Ovary (tissue), 10 donors: ENCODE measurements at regions of chr7 and their contacts with region 1.

Region 1: DNA sequence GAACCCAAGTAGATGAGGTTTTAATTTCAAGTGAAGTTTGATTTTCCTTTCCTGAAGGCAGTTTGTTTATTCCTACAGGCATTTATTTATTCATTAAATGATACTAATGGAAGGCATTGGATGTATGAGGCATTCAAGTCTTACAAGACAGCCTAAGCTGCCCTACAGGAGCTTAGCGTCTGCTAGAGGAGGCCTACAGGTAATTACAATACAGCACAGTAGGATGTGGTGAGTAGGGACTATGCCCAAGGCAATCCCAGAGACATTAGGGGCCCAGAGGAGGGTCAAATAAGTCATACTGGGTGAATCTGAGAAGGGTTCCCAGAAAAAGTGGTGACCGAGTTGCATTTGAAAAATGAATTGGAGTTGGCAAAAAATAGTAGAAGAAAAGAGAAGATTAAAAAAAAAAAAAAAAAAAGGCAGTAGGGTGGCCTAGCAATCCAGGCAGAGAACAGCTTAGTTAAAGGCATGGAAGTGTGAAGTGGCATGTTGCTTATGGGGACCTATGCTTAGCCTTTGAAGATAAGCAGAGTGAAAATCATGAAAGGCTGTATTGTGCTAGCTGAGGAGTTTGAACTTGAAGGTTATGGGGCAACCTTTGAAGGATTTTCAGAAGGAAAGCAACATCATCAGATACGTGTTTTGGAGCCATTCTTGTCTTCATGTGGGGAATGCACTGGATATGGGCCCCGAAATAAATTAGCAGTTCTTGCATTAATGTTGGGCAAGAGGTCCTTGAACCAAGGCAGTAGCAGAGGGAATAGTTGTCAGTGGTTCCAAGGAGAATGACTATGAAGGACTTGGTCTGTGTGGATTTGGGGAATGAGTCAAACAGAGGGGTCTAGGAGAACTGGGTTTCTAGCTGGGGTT is 65.5 kb downstream of the SNX10 start:
- DNase-seq: no peak
- H3K4me3 ChIP-seq: no peak overlapping the region
- H3K27ac ChIP-seq: no peak overlapping the region
- H3K4me1 ChIP-seq: no peaks in the 10 kb centered on the region
- H3K27me3 ChIP-seq: no peaks in the 10 kb centered on the region
- CTCF ChIP-seq: no peak
- EP300 ChIP-seq: no peak
- POLR2A ChIP-seq: no peak

Region 2: GRCh38 chr7:25720427-25720826 is 636.7 kb before region 1 on chr7:
- intact Hi-C with region 1: no loop called
- DNase-seq: no peak
- H3K4me3 ChIP-seq: no peak overlapping the region
- H3K27ac ChIP-seq: no peak overlapping the region
- H3K4me1 ChIP-seq: peaks cover 14% of the 10 kb centered on the region
- H3K27me3 ChIP-seq: no peaks in the 10 kb centered on the region
- CTCF ChIP-seq: no peak
- EP300 ChIP-seq: no peak
- POLR2A ChIP-seq: no peak

Region 3: GRCh38 chr7:26083113-26083512 is 274.1 kb before region 1 on chr7:
- intact Hi-C with region 1: loop called in 3 of 4 experiments (anchors 10 kb)
- DNase-seq: no peak
- H3K4me3 ChIP-seq: no peak overlapping the region
- H3K27ac ChIP-seq: no peak overlapping the region
- H3K4me1 ChIP-seq: no peaks in the 10 kb centered on the region
- H3K27me3 ChIP-seq: no peaks in the 10 kb centered on the region
- CTCF ChIP-seq: no peak
- EP300 ChIP-seq: no peak
- POLR2A ChIP-seq: no peak

Region 4: DNA sequence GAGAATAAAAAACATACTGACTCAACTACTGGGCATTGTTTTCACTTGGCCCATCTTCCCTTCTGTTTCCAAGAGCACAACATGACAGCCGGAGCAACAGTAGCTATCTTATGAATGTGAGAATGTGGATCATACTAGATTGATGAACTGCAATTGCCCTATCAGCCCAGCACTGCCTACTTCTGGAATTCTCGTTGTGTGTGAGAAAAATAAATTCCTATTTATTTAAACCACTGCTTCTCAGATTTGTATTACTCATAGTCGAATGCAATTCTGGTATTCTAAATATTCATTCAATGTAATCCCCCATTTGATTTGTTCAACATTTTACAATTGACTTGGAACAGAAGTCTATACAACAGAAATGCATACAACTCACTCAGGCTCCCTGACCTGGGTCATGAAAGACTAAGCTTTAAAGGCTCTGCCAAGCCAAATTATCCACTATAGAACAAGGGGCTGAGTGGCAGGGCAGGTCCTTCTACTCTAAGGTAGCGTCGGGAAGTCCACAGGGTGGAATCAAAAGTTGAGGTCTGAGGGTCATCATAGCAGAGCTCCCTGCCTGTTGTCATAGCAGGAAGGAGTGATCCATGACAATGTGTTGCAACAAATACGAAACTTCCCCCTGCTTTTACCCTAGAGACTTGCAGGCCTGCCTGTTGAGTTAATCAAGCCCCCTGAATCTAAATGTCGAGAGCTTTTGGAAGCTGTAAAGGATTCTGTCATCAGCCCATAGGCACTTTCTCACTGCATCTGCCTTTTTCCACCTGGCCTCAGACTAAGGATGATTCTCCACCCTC is 1835.8 kb after region 1 on chr7:
- intact Hi-C with region 1: no loop called
- DNase-seq: no peak
- H3K4me3 ChIP-seq: no peak overlapping the region
- H3K27ac ChIP-seq: no peak overlapping the region
- H3K4me1 ChIP-seq: no peaks in the 10 kb centered on the region
- H3K27me3 ChIP-seq: no peaks in the 10 kb centered on the region
- CTCF ChIP-seq: no peak
- EP300 ChIP-seq: no peak
- POLR2A ChIP-seq: no peak